MCF 10A (cell line): ENCODE measurements at regions of chr7 and their contacts with region 1.

Region 1: GRCh38 chr7:155598810-155599210 is 45.7 kb upstream of the RBM33 start:
- DNase-seq: peak; percentile 73
- H3K4me3 Mint-ChIP-seq: no peak overlapping the region
- H3K27ac Mint-ChIP-seq: no peak overlapping the region
- H3K4me1 Mint-ChIP-seq: peaks cover 19% of the 10 kb centered on the region
- H3K27me3 Mint-ChIP-seq: peaks cover 37% of the 10 kb centered on the region
- CTCF ChIP-seq: peak; percentile 93

Region 2: DNA sequence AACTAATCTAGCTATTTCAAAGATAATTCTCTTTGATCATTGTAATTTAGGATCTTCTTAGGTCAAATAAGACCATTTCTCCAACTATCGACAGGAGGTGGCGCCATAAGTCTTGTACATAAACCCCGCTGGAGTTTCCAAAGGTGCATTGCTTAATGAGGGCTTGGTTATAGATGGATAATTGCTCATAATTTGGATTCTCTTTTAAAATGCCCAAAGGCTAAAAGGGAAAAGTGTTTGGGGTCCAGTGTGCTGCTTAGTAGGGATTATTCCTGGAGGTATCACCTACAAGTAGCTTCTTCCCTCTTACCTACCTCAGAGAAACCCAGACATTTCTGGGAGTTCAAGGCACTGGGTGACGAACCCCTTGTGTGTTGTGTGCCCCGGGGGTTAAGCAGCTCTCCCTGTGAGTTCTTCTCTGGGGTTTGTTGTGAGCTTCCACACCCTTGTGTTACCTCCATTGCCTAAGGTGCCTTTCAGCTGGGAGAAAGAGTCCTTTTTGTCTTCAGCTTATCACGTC is 671.1 kb before region 1 on chr7:
- CTCF ChIA-PET with region 1: interaction called, 3 read pairs
- POLR2A ChIA-PET with region 1: no interaction called
- intact Hi-C with region 1: loop called (anchors 5 kb)
- DNase-seq: peak; percentile 86
- H3K4me3 Mint-ChIP-seq: peak overlapping the region; percentile 97
- H3K27ac Mint-ChIP-seq: peak overlapping the region; percentile 93
- H3K4me1 Mint-ChIP-seq: peaks cover 5% of the 10 kb centered on the region
- H3K27me3 Mint-ChIP-seq: no peaks in the 10 kb centered on the region
- CTCF ChIP-seq: peak; percentile 74

Region 3: DNA sequence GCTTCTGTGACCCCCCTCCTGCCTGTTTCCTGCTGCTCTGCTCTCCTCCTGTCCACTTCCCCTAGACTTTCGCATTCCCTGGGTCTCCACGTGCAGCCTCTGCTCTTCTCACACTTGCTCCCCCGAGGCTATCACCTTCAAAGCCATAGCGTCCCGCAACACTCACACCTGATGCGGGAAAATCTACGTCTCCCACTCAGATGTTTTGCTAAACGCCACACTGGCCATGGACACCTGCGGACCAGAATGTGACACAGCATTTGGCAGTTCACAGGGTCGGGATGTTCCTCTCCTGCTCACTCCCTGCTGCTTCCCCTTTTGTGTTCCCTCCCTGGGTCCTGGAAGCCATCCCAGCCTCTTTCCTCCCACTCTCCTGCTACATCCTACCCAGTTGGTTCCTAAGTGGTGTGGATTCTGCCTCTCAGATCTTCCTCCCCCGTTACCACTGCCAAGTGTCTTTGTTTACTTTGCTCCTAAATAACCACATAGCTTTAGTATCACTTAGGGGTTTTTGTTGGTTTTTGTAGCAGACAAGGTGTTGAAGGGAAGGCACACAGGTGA is 11.9 kb after region 1 on chr7:
- CTCF ChIA-PET with region 1: interaction called, 30 read pairs
- POLR2A ChIA-PET with region 1: no interaction called
- intact Hi-C with region 1: no loop called
- DNase-seq: no peak
- H3K4me3 Mint-ChIP-seq: no peak overlapping the region
- H3K27ac Mint-ChIP-seq: no peak overlapping the region
- H3K4me1 Mint-ChIP-seq: peaks cover 7% of the 10 kb centered on the region
- H3K27me3 Mint-ChIP-seq: peaks cover 31% of the 10 kb centered on the region
- CTCF ChIP-seq: no peak

Region 4: DNA sequence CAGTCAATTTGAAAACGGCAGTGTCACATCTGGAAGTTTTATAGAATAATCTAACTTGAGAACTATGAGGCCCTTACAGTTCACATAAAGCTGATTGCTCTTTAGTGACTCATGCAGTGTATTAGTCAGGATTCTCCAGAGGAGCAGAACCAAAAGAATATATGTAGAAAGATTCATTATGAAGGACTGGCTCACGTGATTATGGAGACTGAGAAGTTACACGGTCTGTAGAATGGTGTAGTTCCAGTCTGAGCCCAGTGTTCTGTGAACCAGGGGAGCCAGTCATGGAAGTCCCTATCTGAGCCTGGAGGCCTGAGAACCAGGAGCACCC is 67.1 kb after region 1 on chr7:
- CTCF ChIA-PET with region 1: interaction called, 17 read pairs
- POLR2A ChIA-PET with region 1: interaction called, 3 read pairs
- intact Hi-C with region 1: no loop called
- DNase-seq: peak; percentile 77
- H3K4me3 Mint-ChIP-seq: peak overlapping the region; percentile 21
- H3K27ac Mint-ChIP-seq: peak overlapping the region; percentile 82
- H3K4me1 Mint-ChIP-seq: peaks cover 24% of the 10 kb centered on the region
- H3K27me3 Mint-ChIP-seq: no peaks in the 10 kb centered on the region
- CTCF ChIP-seq: no peak

Region 5: DNA sequence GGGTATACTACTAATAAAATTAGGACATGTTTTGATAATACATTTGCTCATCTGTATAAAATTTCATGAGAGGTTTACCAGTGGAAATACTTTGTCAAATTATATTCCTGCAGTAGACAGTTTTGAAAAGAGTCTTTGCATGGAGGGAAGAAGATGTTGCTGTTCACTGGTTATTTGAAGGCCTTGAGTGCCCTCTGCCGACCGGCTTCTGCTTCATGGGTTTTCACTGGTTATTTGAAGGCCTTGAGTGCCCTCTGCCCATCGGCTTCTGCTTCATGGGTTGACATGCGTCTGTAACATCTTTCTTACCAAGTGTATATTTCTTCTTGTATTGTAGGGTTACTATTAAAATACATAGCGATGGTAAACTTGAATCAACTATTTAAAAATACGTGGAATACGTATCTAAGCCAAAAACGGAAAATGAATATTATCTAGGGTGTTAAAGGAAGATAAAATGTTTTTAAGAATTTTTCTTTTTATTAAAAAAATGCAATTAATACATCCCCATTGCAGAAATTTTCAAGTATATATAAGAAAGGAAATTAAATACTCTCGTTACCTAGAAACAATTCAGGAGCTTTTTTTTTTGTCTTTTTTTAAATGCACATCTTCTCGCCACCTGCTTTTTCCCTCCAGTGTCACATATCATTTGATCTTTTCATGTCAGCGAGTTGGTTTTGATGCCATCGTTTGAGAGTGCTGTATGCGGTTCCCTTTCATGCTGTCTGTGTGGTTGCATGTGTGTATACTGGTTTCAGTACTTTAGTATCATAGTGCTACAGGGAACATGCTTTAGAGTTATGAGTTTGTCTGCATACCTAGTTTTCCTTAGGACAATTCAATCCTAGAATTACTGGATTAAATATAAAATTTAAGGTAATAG is 140.1 kb after region 1 on chr7:
- CTCF ChIA-PET with region 1: interaction called, 74 read pairs
- POLR2A ChIA-PET with region 1: interaction called, 3 read pairs
- intact Hi-C with region 1: loop called (anchors 1 kb)
- DNase-seq: peak; percentile 83
- H3K4me3 Mint-ChIP-seq: no peak overlapping the region
- H3K27ac Mint-ChIP-seq: no peak overlapping the region
- H3K4me1 Mint-ChIP-seq: no peaks in the 10 kb centered on the region
- H3K27me3 Mint-ChIP-seq: no peaks in the 10 kb centered on the region
- CTCF ChIP-seq: peak; percentile 59

Region 6: GRCh38 chr7:155774947-155775346 is 176.1 kb after region 1 on chr7:
- CTCF ChIA-PET with region 1: interaction called, 34 read pairs
- POLR2A ChIA-PET with region 1: no interaction called
- intact Hi-C with region 1: no loop called
- DNase-seq: no peak
- H3K4me3 Mint-ChIP-seq: no peak overlapping the region
- H3K27ac Mint-ChIP-seq: no peak overlapping the region
- H3K4me1 Mint-ChIP-seq: no peaks in the 10 kb centered on the region
- H3K27me3 Mint-ChIP-seq: no peaks in the 10 kb centered on the region
- CTCF ChIP-seq: no peak

Region 7: GRCh38 chr7:156050636-156051578 is 452.1 kb after region 1 on chr7:
- CTCF ChIA-PET with region 1: no interaction called
- POLR2A ChIA-PET with region 1: no interaction called
- intact Hi-C with region 1: no loop called
- DNase-seq: no peak
- H3K4me3 Mint-ChIP-seq: no peak overlapping the region
- H3K27ac Mint-ChIP-seq: no peak overlapping the region
- H3K4me1 Mint-ChIP-seq: no peaks in the 10 kb centered on the region
- H3K27me3 Mint-ChIP-seq: peaks cover 57% of the 10 kb centered on the region
- CTCF ChIP-seq: no peak